ENCODE measurements at regions of chr2 and their contacts with region 1.

Region 1: DNA sequence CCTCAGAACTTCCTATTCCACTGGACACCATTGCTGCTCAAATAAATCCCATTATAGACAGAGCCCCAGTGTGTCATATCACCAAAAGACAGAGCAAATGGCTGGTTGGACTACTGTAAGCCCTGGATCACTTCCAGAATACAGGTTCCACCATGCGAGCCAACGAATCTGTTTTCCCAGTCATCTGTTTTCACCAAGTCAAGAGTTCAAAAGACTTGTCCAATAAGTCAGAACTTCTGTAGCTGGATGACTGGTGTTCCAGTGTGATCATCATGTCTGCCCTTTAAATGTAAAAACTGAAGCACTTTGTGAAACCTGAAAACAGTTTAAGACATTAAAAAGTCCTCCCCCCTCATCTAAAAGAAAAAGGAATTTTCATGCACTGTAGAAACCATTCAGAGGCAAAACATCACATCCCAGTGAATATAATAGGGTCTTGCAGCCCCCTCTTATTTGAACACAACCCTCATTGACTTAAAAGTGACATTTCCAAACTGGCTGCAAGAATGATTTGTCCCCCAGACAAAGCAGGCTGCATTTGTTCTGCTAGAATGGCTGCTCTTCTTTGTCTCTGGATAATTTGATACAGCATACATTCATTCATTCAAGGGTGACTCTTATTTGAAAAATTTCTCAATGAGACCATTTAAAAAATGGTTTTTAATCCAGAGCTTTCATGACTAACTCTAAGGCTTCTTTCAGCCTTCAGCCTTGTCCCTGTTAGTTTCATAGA is 64.6 kb upstream of the TANC1 start:
- DNase-seq: no peak
- H3K4me3 Mint-ChIP-seq: no peak overlapping the region
- H3K27ac Mint-ChIP-seq: no peak overlapping the region
- H3K4me1 Mint-ChIP-seq: no peaks in the 10 kb centered on the region
- H3K27me3 Mint-ChIP-seq: no peaks in the 10 kb centered on the region

Region 2: GRCh38 chr2:157995117-157995516 is 908.8 kb before region 1 on chr2:
- CTCF ChIA-PET with region 1: no interaction called
- intact Hi-C with region 1: no loop called
- DNase-seq: no peak
- H3K4me3 Mint-ChIP-seq: no peak overlapping the region
- H3K27ac Mint-ChIP-seq: no peak overlapping the region
- H3K4me1 Mint-ChIP-seq: no peaks in the 10 kb centered on the region
- H3K27me3 Mint-ChIP-seq: no peaks in the 10 kb centered on the region

Region 3: DNA sequence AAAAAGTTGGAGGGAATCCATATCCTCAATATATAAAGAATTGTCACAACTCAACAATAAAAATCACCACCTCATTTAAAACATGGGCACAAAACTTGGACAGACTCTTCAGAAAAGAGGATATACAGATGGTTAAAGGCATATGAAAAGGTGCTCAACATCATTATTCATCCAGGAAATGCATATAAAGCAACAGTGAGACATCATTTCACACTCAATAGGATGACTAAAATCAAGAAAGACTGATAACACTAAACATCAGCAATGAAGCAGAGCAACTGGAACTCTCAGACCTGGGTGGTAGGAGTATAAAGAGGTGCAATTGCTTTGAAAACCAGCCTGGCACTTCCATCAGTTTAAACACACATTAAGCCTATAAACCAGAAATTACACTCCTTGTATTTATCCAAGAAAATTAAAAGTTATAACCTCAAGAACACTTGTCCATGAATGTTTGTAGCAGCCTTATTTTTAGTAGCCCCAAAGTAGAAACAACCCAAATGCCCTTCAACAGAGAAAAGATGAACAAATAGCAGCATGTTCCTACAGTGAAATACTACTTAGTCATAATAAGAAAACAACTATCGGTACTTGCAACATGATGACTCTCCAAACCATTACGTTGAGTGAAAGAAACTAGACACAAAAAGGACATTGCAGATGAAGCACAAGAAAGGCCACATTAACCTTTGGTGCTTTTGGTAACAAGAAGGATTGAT is 14.6 kb before region 1 on chr2:
- CTCF ChIA-PET with region 1: interaction called, 3 read pairs
- intact Hi-C with region 1: loop called (anchors 2 kb)
- DNase-seq: peak; percentile 12
- H3K4me3 Mint-ChIP-seq: no peak overlapping the region
- H3K27ac Mint-ChIP-seq: peak overlapping the region; percentile 21
- H3K4me1 Mint-ChIP-seq: peaks cover 19% of the 10 kb centered on the region
- H3K27me3 Mint-ChIP-seq: peaks cover 6% of the 10 kb centered on the region

Region 4: GRCh38 chr2:159118115-159118858 is 214.4 kb after region 1 on chr2:
- CTCF ChIA-PET with region 1: interaction called, 61 read pairs
- intact Hi-C with region 1: loop called (anchors 1 kb)
- DNase-seq: peak; percentile 93
- H3K4me3 Mint-ChIP-seq: no peak overlapping the region
- H3K27ac Mint-ChIP-seq: no peak overlapping the region
- H3K4me1 Mint-ChIP-seq: peaks cover 4% of the 10 kb centered on the region
- H3K27me3 Mint-ChIP-seq: no peaks in the 10 kb centered on the region

Region 5: DNA sequence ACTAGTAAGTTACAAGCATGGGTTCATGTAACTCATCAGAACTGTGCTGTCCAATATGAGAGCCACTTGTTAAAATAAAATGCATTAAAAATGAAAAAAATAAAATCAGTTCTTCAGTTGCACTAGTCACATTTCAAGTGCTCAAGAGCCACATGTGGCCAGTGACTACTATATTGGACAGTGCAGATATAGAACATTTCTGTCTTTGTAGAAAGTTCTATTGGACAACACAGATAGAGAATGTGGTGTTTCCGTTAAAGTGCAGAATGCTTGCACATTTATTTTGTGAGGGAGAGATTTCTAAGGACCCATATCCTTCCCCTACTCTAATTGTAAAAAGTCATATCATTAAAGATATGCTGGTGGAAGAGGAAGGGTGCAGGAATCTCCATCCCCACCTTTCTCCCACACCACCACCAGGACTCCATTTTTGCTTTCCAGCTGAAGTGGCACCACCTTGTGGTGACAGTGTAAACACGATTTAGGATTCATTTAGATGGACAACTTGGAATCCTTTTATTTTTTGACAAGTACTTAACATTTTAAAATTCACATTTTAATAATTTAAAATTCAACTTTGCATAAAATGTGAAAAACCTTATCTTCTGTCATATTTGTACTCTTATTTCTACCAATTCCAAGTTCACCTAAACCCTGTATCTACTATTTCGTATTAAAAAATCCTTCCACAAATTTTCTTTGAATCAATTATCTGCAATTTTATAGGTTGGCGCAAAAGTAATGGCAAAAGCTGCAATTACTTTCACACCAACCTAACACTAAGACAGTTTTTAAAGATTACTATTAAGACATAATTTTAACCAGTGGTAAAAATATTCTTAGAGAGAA is 903.5 kb after region 1 on chr2:
- CTCF ChIA-PET with region 1: no interaction called
- intact Hi-C with region 1: loop called (anchors 2 kb)
- DNase-seq: peak; percentile 43
- H3K4me3 Mint-ChIP-seq: no peak overlapping the region
- H3K27ac Mint-ChIP-seq: no peak overlapping the region
- H3K4me1 Mint-ChIP-seq: peaks cover 6% of the 10 kb centered on the region
- H3K27me3 Mint-ChIP-seq: no peaks in the 10 kb centered on the region

Region 6: GRCh38 chr2:160022162-160022561 is 1118.3 kb after region 1 on chr2:
- CTCF ChIA-PET with region 1: no interaction called
- intact Hi-C with region 1: loop called (anchors 10 kb)
- DNase-seq: no peak
- H3K4me3 Mint-ChIP-seq: no peak overlapping the region
- H3K27ac Mint-ChIP-seq: no peak overlapping the region
- H3K4me1 Mint-ChIP-seq: no peaks in the 10 kb centered on the region
- H3K27me3 Mint-ChIP-seq: peaks cover 7% of the 10 kb centered on the region